ENCODE measurements at regions of chr2 and their contacts with region 1.

Region 1: DNA sequence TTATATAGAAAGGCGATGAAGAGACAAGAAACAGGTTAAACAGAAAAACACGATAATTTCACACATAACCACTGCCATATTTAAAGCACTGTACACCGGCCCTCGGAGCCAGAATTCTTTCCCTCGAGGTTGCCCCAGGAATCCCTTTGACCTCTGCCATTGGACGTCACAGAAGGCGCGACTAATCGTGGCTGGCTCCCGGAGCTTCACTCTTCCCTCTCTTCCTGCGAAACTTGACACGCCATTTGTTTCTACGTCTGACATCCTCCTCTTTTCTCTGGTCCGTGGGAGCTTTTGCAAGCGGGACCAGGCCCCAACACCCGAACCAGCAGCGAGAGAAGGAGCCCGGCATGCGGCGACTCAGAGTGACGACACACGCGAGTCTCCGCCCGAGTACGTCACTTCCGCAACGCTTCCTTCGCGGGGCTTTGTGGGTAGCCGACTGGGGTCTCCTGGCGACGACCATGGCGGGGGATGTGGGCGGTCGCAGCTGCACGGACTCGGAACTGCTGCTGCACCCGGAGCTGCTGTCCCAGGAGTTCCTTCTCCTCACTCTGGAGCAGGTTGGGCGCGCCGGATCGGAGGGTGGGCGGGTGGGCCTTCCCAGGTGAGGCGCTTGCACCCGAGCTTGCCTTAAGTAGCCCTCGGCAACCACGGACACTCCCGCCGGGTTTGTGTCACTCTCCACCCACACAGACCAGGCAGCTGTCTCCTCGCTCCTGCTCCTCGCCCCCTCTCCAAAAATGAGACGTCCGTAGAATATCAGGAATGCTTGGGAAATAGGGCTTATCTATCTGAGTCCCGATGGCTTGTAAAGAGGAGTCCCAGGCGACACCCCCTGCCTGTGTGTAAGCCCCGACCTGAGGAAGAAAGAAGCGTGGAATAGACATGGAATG is at the start of gene C2orf49:
- DNase-seq: peak; percentile 79 to 95 (median 85)
- ATAC-seq: peak; percentile 89
- H3K4me3 ChIP-seq: peak within 1 kb of the TSS; percentile 71
- H3K4me3 Mint-ChIP-seq: peak within 1 kb of the TSS; percentile 99
- H3K27ac ChIP-seq: peak within 1 kb of the TSS; percentile 82 to 97
- H3K27ac Mint-ChIP-seq: peak within 1 kb of the TSS; percentile 100
- H3K4me1 ChIP-seq: peaks cover 19% of the 10 kb centered on the region
- H3K4me1 Mint-ChIP-seq: peaks cover 50% of the 10 kb centered on the region
- H3K27me3 ChIP-seq: no peaks in the 10 kb centered on the region
- H3K27me3 Mint-ChIP-seq: no peaks in the 10 kb centered on the region
- CTCF ChIP-seq: no peak
- total RNA-seq, gene C2orf49: 28.8 to 29.4 TPM

Region 2: DNA sequence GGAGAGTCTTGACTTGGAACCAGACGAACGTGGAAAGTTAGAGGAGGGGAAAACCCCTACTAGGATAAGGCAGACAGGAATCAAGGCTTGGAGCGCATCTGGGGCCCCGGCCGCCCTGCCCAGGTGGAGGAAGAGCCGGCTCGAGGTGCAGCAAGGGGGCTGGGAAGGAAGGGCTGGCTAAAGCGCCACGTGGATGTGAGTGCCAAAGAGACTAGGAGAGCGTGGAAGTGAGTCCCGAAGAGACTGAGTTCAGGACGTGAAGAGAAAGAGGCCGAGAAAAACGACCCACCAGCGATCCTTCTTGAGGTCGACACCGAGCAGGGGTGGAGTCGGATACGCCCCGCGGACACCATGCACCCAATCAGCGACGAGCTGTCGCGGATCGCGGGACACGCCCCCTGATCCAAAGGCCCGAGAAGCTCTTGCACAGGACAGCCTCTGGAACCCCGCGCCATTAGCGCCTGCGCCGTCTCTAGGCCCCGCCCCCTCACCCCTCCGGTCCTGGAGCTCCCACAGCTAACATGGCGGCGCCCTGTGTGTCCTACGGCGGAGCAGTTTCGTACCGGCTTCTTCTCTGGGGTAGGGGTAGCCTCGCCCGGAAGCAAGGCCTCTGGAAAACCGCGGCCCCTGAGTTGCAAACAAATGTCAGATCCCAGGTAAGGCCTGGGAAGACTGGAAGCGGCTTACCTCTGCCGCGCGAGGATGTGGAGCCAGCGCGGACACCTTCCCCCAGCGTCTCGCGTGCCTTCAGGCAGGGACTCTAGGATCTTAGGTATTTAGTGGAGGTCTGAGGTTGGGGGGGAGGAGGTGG is 299.6 kb before region 1 on chr2 and contains the start of gene MRPS9:
- CTCF ChIA-PET with region 1: no interaction called
- POLR2A ChIA-PET with region 1: interaction called, 3 read pairs
- intact Hi-C with region 1: loop called in 1 of 2 experiments (anchors 5 kb)
- DNase-seq: peak; percentile 95 to 99 (median 97)
- ATAC-seq: peak; percentile 97
- H3K4me3 ChIP-seq: peak within 1 kb of the TSS; percentile 97
- H3K4me3 Mint-ChIP-seq: peak within 1 kb of the TSS; percentile 94
- H3K27ac ChIP-seq: peak within 1 kb of the TSS; percentile 76 to 84
- H3K27ac Mint-ChIP-seq: peak within 1 kb of the TSS; percentile 87
- H3K4me1 ChIP-seq: peaks cover 10% of the 10 kb centered on the region
- H3K4me1 Mint-ChIP-seq: peaks cover 55% of the 10 kb centered on the region
- H3K27me3 ChIP-seq: no peaks in the 10 kb centered on the region
- H3K27me3 Mint-ChIP-seq: no peaks in the 10 kb centered on the region
- CTCF ChIP-seq: no peak
- total RNA-seq, gene MRPS9: 7.3 to 9.2 TPM

Region 3: DNA sequence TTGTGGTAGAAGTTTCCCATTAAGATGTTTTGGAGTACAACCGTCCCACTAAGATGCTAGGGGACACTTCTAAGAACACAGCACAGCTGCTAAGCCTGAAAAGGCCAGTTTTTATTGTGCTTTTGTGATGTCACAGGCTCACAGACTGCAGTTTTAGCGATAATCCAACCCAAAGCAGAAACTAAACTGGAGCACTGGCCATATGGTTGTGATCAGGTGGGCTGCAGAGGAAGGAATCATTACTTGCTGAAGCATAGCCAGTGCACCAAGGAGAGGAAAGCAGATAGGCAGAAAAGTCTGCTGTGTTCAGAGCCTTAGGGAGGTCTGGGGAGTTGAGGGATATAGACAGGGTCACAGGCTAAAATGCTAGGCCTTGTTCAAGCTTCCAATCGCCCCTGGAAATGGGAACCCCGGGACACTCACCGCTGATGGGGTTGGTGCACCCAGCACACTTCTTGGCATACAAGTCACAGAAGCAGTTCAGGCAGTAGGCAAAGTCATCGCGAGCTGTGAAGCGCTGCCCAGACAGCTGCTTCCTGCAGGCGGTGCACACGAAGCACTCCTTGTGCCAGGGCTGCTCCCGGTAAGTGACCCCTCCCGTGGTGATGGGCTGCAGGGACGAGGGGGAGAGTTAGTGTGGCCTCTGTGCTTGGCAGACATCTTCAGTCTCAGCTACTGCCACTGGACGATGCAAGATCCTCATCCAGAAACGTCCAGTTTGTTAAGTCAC is 25.7 kb after region 1 on chr2:
- CTCF ChIA-PET with region 1: no interaction called
- POLR2A ChIA-PET with region 1: no interaction called
- intact Hi-C with region 1: no loop called
- DNase-seq: peak in 1 of 14 experiments; percentile 9
- ATAC-seq: no peak
- H3K4me3 ChIP-seq: no peak overlapping the region
- H3K4me3 Mint-ChIP-seq: no peak overlapping the region
- H3K27ac ChIP-seq: no peak overlapping the region
- H3K27ac Mint-ChIP-seq: peak overlapping the region; percentile 69
- H3K4me1 ChIP-seq: peaks cover 8% of the 10 kb centered on the region
- H3K4me1 Mint-ChIP-seq: peaks cover 44% of the 10 kb centered on the region
- H3K27me3 ChIP-seq: no peaks in the 10 kb centered on the region
- H3K27me3 Mint-ChIP-seq: no peaks in the 10 kb centered on the region
- CTCF ChIP-seq: no peak

Region 4: DNA sequence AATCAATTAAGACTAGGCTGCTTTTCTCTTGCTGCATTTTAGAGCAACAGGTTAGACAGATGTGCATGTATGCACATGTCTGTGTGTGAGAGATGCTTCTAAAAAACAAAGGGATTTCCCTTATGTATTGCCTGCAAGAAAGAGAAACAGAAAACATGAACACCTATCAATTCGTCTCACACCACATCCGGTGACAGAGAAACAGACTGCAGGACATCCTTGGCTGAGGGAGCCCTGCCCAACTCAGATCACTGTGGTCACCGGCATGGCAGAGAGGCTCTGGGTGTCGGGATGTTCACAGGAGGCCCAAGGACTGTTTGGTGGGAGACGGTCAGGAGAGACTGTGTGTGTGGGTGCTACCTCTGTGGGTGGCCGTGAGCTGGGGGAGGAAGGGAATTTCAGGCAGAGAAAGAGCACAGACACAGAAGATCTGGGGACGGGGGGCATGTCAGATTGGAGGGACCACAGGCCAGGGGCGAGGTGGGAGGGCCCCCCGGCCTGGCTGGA is 36.6 kb after region 1 on chr2:
- CTCF ChIA-PET with region 1: no interaction called
- POLR2A ChIA-PET with region 1: no interaction called
- intact Hi-C with region 1: no loop called
- DNase-seq: peak in 5 of 14 experiments; percentile 7 to 76 (median 44)
- ATAC-seq: no peak
- H3K4me3 ChIP-seq: no peak overlapping the region
- H3K4me3 Mint-ChIP-seq: peak overlapping the region; percentile 48
- H3K27ac ChIP-seq: no peak overlapping the region
- H3K27ac Mint-ChIP-seq: peak overlapping the region; percentile 62
- H3K4me1 ChIP-seq: peaks cover 24% of the 10 kb centered on the region
- H3K4me1 Mint-ChIP-seq: peaks cover 13% of the 10 kb centered on the region
- H3K27me3 ChIP-seq: no peaks in the 10 kb centered on the region
- H3K27me3 Mint-ChIP-seq: no peaks in the 10 kb centered on the region
- CTCF ChIP-seq: no peak